CD4-positive, alpha-beta memory T cell (primary cell): ENCODE measurements at regions of chr10 and their contacts with region 1.

Region 1: DNA sequence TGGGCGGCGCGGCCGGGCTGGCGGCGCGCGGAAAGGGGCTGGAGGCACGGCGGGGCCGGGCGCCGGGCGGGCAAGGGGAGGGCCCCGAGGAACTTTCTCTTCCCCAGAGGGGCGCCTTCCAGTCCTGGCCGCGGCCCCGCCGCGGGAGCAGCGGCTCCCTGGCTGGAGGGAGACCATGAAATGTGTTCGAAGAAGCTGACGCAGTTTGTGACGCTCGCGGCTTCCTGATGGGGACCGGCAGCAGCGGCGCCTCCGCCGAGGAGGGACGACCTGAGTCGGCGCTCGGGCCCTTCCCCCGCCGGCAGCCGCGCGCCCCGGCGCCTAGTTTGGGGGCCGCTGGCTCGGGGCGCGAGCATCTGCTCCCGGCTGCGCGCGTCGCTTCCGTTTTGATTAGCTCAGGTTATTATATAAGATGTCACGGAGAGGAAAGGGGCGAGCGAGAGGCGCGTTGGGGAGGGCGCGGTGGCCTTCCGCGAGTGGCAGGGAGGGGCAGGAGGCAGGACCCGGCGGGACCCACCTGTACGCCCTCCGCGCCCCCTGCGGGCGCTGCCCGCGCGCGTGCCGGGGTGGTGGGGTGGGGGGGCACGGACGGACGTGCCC is 57.1 kb upstream of the PCGF5 start:
- DNase-seq: peak; percentile 86 to 94 (median 90)
- H3K4me3 ChIP-seq: peak overlapping the region; percentile 63 to 73
- H3K4me3 Mint-ChIP-seq: peak overlapping the region; percentile 91 to 95 (median 93)
- H3K27ac ChIP-seq: peak overlapping the region; percentile 83
- H3K27ac Mint-ChIP-seq: peak overlapping the region; percentile 94 to 99 (median 97)
- H3K4me1 ChIP-seq: peaks cover 47% of the 10 kb centered on the region
- H3K4me1 Mint-ChIP-seq: peaks cover 36 to 65% (median 49%) of the 10 kb centered on the region in 4 donors
- H3K27me3 ChIP-seq: no peaks in the 10 kb centered on the region
- H3K27me3 Mint-ChIP-seq: no peaks in the 10 kb centered on the region

Region 2: GRCh38 chr10:89701238-89702120 is 1461.9 kb before region 1 on chr10 and contains the start of gene KIF20B:
- CTCF ChIA-PET with region 1: no interaction called
- POLR2A ChIA-PET with region 1: no interaction called
- intact Hi-C with region 1: loop called (anchors 1 kb)
- DNase-seq: peak; percentile 95 to 97 (median 96)
- H3K4me3 ChIP-seq: peak within 1 kb of the TSS; percentile 74 to 99
- H3K4me3 Mint-ChIP-seq: peak within 1 kb of the TSS; percentile 97 to 99 (median 99)
- H3K27ac ChIP-seq: peak within 1 kb of the TSS; percentile 75
- H3K27ac Mint-ChIP-seq: peak within 1 kb of the TSS; percentile 97 to 99 (median 99)
- H3K4me1 ChIP-seq: peaks cover 35% of the 10 kb centered on the region
- H3K4me1 Mint-ChIP-seq: peaks cover 21 to 53% (median 33%) of the 10 kb centered on the region in 4 donors
- H3K27me3 ChIP-seq: no peaks in the 10 kb centered on the region
- H3K27me3 Mint-ChIP-seq: no peaks in the 10 kb centered on the region
- total RNA-seq, gene KIF20B: 20.7 to 21.4 TPM

Region 3: GRCh38 chr10:91006001-91006751 is 157.2 kb before region 1 on chr10:
- CTCF ChIA-PET with region 1: interaction called, 16 read pairs
- POLR2A ChIA-PET with region 1: no interaction called
- intact Hi-C with region 1: loop called (anchors 1 kb)
- DNase-seq: peak; percentile 60 to 73 (median 67)
- H3K4me3 ChIP-seq: no peak overlapping the region
- H3K4me3 Mint-ChIP-seq: peak overlapping the region; percentile 40 to 89 (median 73)
- H3K27ac ChIP-seq: no peak overlapping the region
- H3K27ac Mint-ChIP-seq: peak overlapping the region; percentile 30 to 88 (median 74)
- H3K4me1 ChIP-seq: peaks cover 18% of the 10 kb centered on the region
- H3K4me1 Mint-ChIP-seq: peaks cover 11 to 21% (median 16%) of the 10 kb centered on the region in 4 donors
- H3K27me3 ChIP-seq: no peaks in the 10 kb centered on the region
- H3K27me3 Mint-ChIP-seq: peaks cover 0 to under 1% of the 10 kb centered on the region in 2 donors

Region 4: GRCh38 chr10:91185239-91185875 is 22.0 kb after region 1 on chr10:
- CTCF ChIA-PET with region 1: interaction called, 5 read pairs
- POLR2A ChIA-PET with region 1: interaction called, 16 read pairs
- intact Hi-C with region 1: loop called (anchors 2 kb)
- DNase-seq: no peak
- H3K4me3 ChIP-seq: no peak overlapping the region
- H3K4me3 Mint-ChIP-seq: peak overlapping the region in 5 of 8 donors; percentile 23 to 53 (median 46)
- H3K27ac ChIP-seq: no peak overlapping the region
- H3K27ac Mint-ChIP-seq: peak overlapping the region in 5 of 7 donors; percentile 3 to 58 (median 29)
- H3K4me1 ChIP-seq: peaks cover 61% of the 10 kb centered on the region
- H3K4me1 Mint-ChIP-seq: peaks cover 70 to 92% (median 82%) of the 10 kb centered on the region in 4 donors
- H3K27me3 ChIP-seq: no peaks in the 10 kb centered on the region
- H3K27me3 Mint-ChIP-seq: no peaks in the 10 kb centered on the region

Region 5: DNA sequence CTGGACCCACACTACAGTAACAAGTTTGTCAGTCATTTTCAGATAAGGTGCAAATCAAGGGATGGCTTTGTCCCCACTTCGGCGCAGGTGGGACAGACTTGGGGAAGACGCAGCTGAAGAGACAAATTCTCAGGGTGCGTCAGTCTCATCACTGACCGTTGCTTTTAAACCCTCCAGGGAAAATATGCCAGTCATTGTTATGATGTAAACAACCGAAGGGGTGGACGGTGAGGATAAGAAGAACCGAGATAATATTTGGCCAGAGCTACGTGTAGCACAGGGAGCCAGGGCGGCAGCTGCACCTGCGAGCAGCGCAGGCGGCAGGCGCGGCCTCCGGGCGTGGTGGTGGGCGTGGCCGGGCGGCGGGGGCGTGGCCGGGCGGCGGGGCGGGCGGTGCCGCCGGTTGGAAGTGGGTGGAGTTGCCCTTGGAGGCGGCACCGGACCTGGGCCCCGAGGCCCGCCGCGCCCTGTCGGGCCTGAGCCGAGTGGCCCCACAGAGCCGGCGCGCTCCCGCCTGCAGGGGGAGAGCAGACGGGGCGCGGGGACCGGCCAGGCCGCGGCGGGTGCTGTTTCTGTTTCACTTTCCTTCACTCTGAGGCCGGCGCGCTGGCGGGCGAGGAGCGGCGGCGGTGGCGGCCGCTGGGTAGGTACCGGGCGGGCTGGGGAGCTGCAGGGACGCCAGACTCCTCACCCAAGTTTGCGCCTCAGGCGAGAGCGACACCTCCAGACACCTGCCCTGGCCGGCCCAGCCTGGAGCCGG is 57.0 kb after region 1 on chr10 and contains the start of gene PCGF5:
- CTCF ChIA-PET with region 1: interaction called, 5 read pairs
- POLR2A ChIA-PET with region 1: interaction called, 120 read pairs
- intact Hi-C with region 1: loop called (anchors 1 kb)
- DNase-seq: peak; percentile 90 to 93 (median 93)
- H3K4me3 ChIP-seq: peak within 1 kb of the TSS; percentile 25 to 65
- H3K4me3 Mint-ChIP-seq: peak within 1 kb of the TSS; percentile 86 to 93 (median 90)
- H3K27ac ChIP-seq: peak within 1 kb of the TSS; percentile 85
- H3K27ac Mint-ChIP-seq: peak within 1 kb of the TSS; percentile 89 to 95 (median 94)
- H3K4me1 ChIP-seq: peaks cover 48% of the 10 kb centered on the region
- H3K4me1 Mint-ChIP-seq: peaks cover 41 to 63% (median 49%) of the 10 kb centered on the region in 4 donors
- H3K27me3 ChIP-seq: no peaks in the 10 kb centered on the region
- H3K27me3 Mint-ChIP-seq: no peaks in the 10 kb centered on the region
- total RNA-seq, gene PCGF5: 51.0 to 52.9 TPM

Region 6: GRCh38 chr10:91257310-91257709 is 93.9 kb after region 1 on chr10:
- CTCF ChIA-PET with region 1: no interaction called
- POLR2A ChIA-PET with region 1: no interaction called
- intact Hi-C with region 1: no loop called
- DNase-seq: no peak
- H3K4me3 ChIP-seq: no peak overlapping the region
- H3K4me3 Mint-ChIP-seq: no peak overlapping the region
- H3K27ac ChIP-seq: no peak overlapping the region
- H3K27ac Mint-ChIP-seq: no peak overlapping the region
- H3K4me1 ChIP-seq: no peaks in the 10 kb centered on the region
- H3K4me1 Mint-ChIP-seq: peaks cover 0 to 3% (median 0%) of the 10 kb centered on the region in 4 donors
- H3K27me3 ChIP-seq: no peaks in the 10 kb centered on the region
- H3K27me3 Mint-ChIP-seq: no peaks in the 10 kb centered on the region

Region 7: GRCh38 chr10:91409869-91410637 is 246.7 kb after region 1 on chr10 and contains the start of gene HECTD2:
- CTCF ChIA-PET with region 1: no interaction called
- POLR2A ChIA-PET with region 1: interaction called, 3 read pairs
- intact Hi-C with region 1: loop called (anchors 1 kb)
- DNase-seq: peak; percentile 78 to 90 (median 88)
- H3K4me3 ChIP-seq: peak within 1 kb of the TSS; percentile 88 to 92
- H3K4me3 Mint-ChIP-seq: peak within 1 kb of the TSS; percentile 88 to 97 (median 91)
- H3K27ac ChIP-seq: peak within 1 kb of the TSS; percentile 74
- H3K27ac Mint-ChIP-seq: peak within 1 kb of the TSS; percentile 78 to 97 (median 95)
- H3K4me1 ChIP-seq: peaks cover 20% of the 10 kb centered on the region
- H3K4me1 Mint-ChIP-seq: peaks cover 7 to 15% (median 11%) of the 10 kb centered on the region in 4 donors
- H3K27me3 ChIP-seq: no peaks in the 10 kb centered on the region
- H3K27me3 Mint-ChIP-seq: peaks cover 0 to under 1% of the 10 kb centered on the region in 2 donors
- total RNA-seq, gene HECTD2: 2.6 to 2.7 TPM

Region 8: GRCh38 chr10:92592761-92593618 is 1429.6 kb after region 1 on chr10 and contains the start of gene KIF11:
- CTCF ChIA-PET with region 1: no interaction called
- POLR2A ChIA-PET with region 1: interaction called, 3 read pairs
- intact Hi-C with region 1: loop called (anchors 10 kb)
- DNase-seq: peak; percentile 93 to 97 (median 93)
- H3K4me3 ChIP-seq: peak within 1 kb of the TSS; percentile 65 to 76
- H3K4me3 Mint-ChIP-seq: peak within 1 kb of the TSS; percentile 93 to 99 (median 98)
- H3K27ac ChIP-seq: peak within 1 kb of the TSS; percentile 85
- H3K27ac Mint-ChIP-seq: peak within 1 kb of the TSS; percentile 99 to 100 (median 100)
- H3K4me1 ChIP-seq: peaks cover 49% of the 10 kb centered on the region
- H3K4me1 Mint-ChIP-seq: peaks cover 27 to 63% (median 36%) of the 10 kb centered on the region in 4 donors
- H3K27me3 ChIP-seq: no peaks in the 10 kb centered on the region
- H3K27me3 Mint-ChIP-seq: no peaks in the 10 kb centered on the region
- total RNA-seq, gene KIF11: 2.0 to 2.1 TPM